ENCODE measurements at regions of chr19 and their contacts with region 1.

Region 1: DNA sequence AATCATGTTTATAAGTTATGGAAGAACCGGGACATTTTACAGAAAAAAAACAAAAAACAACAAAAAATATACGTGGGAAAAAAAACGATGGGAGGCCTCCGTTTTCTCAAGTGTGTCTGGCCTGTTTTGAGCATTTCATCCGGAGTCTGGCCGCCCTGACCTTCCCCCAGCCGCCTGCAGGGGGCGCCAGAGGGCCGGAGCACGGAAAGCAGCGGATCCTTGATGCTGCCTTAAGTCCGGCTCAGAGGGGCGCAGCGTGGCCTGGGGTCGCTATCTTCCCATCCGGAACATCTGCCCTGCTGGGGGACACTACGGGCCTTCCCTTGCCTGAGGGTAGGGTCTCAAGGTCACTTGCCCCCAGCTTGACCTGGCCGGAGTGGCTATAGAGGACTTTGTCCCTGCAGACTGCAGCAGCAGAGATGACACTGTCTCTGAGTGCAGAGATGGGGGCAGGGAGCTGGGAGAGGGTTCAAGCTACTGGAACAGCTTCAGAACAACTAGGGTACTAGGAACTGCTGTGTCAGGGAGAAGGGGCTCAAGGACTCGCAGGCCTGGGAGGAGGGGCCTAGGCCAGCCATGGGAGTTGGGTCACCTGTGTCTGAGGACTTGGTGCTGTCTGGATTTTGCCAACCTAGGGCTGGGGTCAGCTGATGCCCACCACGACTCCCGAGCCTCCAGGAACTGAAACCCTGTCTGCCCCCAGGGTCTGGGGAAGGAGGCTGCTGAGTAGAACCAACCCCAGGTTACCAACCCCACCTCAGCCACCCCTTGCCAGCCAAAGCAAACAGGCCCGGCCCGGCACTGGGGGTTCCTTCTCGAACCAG is 1.8 kb upstream of the APOE start:
- DNase-seq: peak; percentile 88

Region 2: GRCh38 chr19:44782729-44783128 is 121.1 kb before region 1 on chr19:
- intact Hi-C with region 1: no loop called
- DNase-seq: no peak

Region 3: DNA sequence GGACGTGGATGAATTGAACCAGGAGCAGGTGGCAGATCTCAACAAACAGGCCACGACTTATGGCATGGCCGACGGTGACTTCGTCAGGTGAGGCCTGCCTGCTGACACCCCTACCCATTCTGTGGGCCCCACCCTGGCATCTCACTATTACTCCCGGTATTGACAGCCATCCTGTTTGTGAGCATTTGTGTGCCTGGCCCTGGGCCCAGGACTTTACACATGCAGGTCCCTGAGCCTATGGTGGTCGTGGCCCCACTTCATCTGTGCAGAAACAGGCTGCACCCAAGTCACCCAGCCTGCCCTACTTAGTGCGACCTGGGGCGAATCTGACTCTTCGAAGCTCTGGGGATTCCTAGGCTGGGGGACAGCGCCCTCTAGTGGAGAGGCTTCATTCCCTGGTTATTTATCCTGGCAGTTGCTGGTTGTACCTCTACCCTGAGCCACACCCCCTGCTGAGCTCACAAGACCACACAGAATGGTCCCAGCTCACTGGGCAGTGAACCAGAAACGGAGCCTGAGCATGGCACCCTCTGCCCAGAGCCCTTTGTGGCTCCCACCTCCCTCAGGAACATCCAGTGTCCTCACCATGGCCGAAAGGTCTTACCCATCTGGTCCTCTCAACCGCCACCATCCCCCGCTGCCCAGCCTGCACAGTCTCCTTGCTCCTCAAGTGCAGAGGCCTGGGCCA is 155.6 kb after region 1 on chr19:
- intact Hi-C with region 1: loop called (anchors 5 kb)
- DNase-seq: peak; percentile 85

Region 4: DNA sequence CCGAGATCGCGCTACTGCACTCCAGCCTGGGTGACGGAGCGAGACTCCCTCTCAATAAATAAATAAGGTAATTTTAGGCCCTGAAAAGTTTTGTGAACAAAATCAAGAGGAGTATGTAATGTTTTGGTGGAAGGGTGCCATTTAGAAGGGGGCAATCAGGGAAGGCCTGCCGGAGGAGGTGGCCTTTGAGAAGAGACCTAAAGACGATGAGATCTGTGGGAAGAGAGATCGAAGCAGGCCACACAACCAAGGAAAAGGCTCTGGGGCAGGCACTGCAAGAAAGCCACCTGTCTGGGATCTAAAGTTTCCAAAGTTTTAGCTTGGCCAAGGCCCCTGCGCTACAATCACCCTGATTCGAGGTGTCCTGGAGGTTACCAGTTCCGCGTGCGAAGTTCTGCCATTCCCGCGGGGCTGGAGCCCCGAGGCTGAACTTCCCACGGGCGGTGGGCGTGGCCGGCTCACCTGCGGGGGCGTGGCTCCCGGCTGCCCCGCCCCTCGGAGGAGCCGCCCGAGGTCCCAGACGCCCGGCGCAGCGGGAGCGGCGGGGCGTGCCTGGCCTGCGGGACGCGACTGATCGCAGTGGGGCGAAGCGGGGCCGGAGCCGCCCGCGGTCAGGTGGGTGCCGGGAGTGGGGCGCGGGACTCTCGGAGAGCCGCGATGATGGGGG is 436.6 kb after region 1 on chr19 and contains the start of gene KLC3:
- intact Hi-C with region 1: loop called (anchors 5 kb)
- DNase-seq: no peak
- total RNA-seq, gene KLC3: not detected